AG04450 (cell line): ENCODE measurements at regions of chr1 and their contacts with region 1.

Region 1: GRCh38 chr1:84753516-84754385 is 63.5 kb upstream of the SSX2IP start:
- DNase-seq: peak; percentile 75
- H3K4me3 ChIP-seq: no peak overlapping the region
- H3K27ac ChIP-seq: no peak overlapping the region
- H3K27me3 ChIP-seq: peaks cover 2% of the 10 kb centered on the region
- CTCF ChIP-seq: peak; percentile 100

Region 2: DNA sequence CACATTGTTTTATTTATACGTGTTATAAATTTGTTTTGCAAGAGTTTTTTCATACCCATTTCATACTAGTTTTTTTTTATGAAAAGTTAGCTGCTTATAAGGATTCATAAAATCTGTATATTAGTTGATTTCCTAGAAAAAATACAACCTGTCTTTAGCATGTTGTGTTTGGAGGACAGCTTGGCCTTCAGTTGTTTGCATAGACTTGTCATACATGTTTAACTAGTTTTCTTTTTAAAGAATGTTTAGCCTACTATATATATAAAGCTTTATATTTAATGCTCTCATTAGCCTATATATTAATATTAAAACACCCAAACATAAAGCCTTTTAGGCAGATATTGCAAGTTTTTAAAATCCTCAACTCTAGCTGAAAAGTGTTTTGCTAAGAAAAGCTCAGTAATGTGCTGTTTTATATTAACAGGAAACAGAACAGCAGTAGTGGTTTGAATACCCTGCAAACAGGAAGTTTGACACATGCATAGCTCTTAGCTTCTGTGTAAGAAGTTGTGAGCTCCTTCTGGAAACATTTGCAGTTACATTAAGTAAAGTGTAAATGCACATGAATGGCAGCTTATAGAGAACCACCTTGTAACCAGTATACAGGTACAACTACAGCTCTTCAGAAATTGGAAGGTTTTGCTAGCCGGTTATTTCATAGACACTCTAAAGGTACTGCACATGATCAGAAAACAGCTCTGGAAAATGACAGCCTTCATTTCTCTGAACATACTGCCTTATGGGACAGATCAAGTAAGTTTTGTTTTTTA is 609.8 kb before region 1 on chr1 and contains the start of gene PRKACB:
- CTCF ChIA-PET with region 1: interaction called, 20 read pairs
- POLR2A ChIA-PET with region 1: no interaction called
- DNase-seq: no peak
- H3K4me3 ChIP-seq: no peak within 1 kb of the TSS
- H3K27ac ChIP-seq: no peak within 1 kb of the TSS
- H3K27me3 ChIP-seq: no peaks in the 10 kb centered on the region
- CTCF ChIP-seq: no peak
- polyA plus RNA-seq, gene PRKACB: 25.2 and 33.4 TPM in 2 replicates

Region 3: GRCh38 chr1:84442256-84442655 is 311.5 kb before region 1 on chr1:
- CTCF ChIA-PET with region 1: interaction called, 62 read pairs
- POLR2A ChIA-PET with region 1: interaction called, 3 read pairs
- DNase-seq: peak; percentile 78
- H3K4me3 ChIP-seq: no peak overlapping the region
- H3K27ac ChIP-seq: no peak overlapping the region
- H3K27me3 ChIP-seq: no peaks in the 10 kb centered on the region
- CTCF ChIP-seq: peak; percentile 57

Region 4: DNA sequence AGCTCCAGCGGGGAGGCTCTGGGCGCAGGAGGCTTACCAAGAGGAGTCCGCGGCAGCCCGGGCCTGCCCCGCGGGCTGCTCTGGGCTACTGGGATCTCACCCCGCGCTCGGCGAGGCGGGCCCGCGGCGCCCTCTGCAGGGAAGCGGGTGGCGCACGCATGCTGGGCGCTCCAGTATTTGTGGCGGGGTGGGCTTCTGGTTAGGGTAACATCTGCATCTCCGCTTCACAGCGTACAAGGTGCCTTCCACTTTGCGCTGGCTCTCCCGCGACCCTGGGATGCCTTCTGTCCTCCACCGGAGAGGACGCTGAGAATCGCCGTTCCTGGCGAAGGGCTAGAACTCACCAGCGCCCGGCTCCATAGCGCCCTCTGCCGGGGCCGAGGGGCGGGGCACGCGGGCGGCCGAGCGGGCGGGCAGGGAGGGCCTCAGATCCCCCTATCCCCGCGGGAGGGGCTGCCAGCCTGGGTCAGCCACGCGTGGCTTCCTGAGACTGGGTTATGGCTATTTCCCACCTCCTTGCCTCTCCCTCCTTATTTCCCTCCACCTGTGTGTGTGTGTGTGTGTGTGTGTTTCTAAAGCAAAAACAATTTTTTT is 132.9 kb before region 1 on chr1:
- CTCF ChIA-PET with region 1: interaction called, 15 read pairs
- POLR2A ChIA-PET with region 1: no interaction called
- DNase-seq: no peak
- H3K4me3 ChIP-seq: peak overlapping the region; percentile 66
- H3K27ac ChIP-seq: peak overlapping the region; percentile 77
- H3K27me3 ChIP-seq: no peaks in the 10 kb centered on the region
- CTCF ChIP-seq: peak; percentile 69

Region 5: GRCh38 chr1:84668185-84668584 is 85.6 kb before region 1 on chr1:
- CTCF ChIA-PET with region 1: interaction called, 17 read pairs
- POLR2A ChIA-PET with region 1: interaction called, 3 read pairs
- DNase-seq: no peak
- H3K4me3 ChIP-seq: no peak overlapping the region
- H3K27ac ChIP-seq: no peak overlapping the region
- H3K27me3 ChIP-seq: no peaks in the 10 kb centered on the region
- CTCF ChIP-seq: peak; percentile 27; the same call in 1 of the 2 replicates

Region 6: DNA sequence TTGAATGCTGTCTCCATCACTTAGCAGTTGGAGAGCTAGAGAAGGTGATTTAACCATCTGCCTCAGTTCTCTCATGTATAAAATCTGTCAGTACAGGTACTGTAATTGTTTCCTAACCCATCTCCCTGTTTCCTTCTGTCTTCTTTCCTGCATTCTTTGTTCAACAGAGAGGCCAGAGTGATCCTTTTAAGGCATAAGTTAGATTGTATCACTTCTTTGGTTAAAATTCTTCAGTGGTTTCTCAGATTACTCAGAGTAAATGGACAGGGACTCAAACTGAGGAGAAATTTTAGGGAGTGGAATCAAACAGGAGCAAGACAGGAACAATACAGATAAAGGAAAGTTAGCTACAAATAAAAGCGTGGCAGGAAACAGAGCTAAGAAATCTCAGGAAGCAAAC is 18.3 kb before region 1 on chr1:
- CTCF ChIA-PET with region 1: interaction called, 17 read pairs
- POLR2A ChIA-PET with region 1: no interaction called
- DNase-seq: no peak
- H3K4me3 ChIP-seq: no peak overlapping the region
- H3K27ac ChIP-seq: no peak overlapping the region
- H3K27me3 ChIP-seq: no peaks in the 10 kb centered on the region
- CTCF ChIP-seq: no peak

Region 7: GRCh38 chr1:84772428-84772943 is 18.7 kb after region 1 on chr1:
- CTCF ChIA-PET with region 1: interaction called, 14 read pairs
- POLR2A ChIA-PET with region 1: no interaction called
- DNase-seq: peak; percentile 59
- H3K4me3 ChIP-seq: no peak overlapping the region
- H3K27ac ChIP-seq: no peak overlapping the region
- H3K27me3 ChIP-seq: peaks cover 7% of the 10 kb centered on the region
- CTCF ChIP-seq: peak; percentile 98

Region 8: GRCh38 chr1:84907095-84907827 is 153.5 kb after region 1 on chr1:
- CTCF ChIA-PET with region 1: no interaction called
- POLR2A ChIA-PET with region 1: no interaction called
- DNase-seq: no peak
- H3K4me3 ChIP-seq: no peak overlapping the region
- H3K27ac ChIP-seq: no peak overlapping the region
- H3K27me3 ChIP-seq: no peaks in the 10 kb centered on the region
- CTCF ChIP-seq: no peak

Region 9: GRCh38 chr1:85398391-85399064 is 644.8 kb after region 1 on chr1:
- CTCF ChIA-PET with region 1: no interaction called
- POLR2A ChIA-PET with region 1: no interaction called
- DNase-seq: no peak
- H3K4me3 ChIP-seq: no peak overlapping the region
- H3K27ac ChIP-seq: no peak overlapping the region
- H3K27me3 ChIP-seq: no peaks in the 10 kb centered on the region
- CTCF ChIP-seq: peak; percentile 65